Cardiac septum (tissue), 1 donor: ENCODE measurements at regions of chr10 and their contacts with region 1.

Region 1: DNA sequence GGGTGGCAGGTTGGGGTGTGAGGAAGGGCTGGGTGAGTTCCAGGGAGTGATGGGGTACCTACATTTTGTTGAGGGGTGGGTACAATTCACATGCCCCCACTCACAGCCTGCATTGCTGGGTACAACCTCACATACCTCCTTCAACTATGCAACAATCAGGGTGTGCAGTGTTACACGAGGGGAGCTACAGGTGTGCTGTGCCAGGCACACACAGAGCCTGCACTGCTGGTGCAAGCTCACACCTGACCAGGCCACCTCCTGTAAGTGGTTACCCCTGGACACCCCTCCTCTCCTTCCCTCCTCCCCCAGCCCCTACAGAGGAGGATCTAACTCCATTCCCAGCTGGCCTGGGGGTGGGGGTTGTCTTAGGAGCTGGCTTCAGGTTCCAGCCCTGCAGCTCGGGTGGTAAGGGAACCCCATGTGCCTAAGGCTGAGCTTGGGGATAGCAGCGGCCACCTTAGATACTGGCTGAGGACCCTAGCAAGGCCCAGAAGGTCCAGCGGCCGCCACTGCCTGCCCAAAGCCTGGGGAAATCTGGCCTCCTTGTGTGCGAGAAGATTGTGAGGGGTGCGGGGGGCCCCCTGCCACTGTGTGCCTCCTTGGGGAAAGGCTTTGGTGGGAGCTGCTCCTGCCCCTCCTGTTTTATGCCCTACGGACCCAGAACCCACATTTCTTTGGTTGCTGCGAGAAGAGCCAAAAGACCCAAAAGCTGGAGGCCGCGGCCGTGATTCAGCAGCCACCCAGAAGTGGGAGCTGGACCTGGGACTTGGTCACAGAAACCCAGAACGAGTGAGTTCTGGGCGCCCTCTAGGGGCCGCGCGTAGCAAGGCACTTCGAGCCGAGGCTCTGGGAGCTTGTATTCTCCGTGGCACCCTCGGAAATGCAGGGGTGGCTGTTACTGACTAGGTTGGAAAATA is 10.8 kb downstream of the TLX1 start:
- DNase-seq: peak; percentile 89

Region 2: GRCh38 chr10:101050208-101051069 is 91.4 kb before region 1 on chr10:
- intact Hi-C with region 1: loop called (anchors 5 kb)
- DNase-seq: peak; percentile 85

Region 3: GRCh38 chr10:101095542-101096213 is 46.2 kb before region 1 on chr10:
- intact Hi-C with region 1: loop called (anchors 2 kb)
- DNase-seq: no peak

Region 4: DNA sequence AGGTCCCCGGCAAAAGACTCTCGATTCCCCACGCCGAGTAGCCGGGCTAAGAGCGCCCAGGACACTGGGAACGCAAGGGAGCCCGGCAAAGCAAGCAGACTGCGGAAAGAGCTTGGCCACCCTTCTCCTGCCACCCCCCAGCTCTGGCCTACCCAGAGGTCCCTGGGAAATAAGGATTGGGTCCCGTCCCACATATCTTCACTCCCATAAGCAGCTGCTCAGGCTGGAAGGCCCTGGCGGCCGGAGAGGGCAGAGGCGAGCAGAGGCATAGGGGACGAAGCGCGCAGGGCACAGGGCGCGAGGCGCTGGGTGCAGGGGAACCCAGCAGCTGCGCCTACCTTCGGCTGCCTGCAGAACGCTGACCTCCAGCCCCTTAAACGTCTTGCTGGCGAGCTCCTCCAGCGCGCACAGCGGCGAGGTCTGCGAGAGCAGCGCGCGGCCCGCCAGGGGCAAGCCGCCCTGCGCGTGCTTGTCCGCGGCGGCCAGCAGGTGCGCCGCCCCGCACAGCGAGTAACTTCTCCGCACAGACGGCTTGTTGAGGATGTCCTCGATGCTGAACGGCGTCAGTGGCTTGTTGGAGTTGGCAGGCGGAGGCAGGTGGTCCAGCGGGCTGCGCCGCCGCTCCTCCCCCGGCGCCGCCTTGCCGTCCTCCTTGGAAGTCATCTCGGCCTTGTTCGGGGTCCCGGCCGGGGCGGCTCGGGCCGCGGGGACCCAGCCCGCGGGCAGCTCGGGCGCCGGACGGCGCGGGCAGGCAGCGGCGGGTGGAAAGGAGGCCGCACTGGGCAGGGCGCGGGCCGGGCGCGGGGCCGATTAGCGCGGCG is 86.5 kb after region 1 on chr10:
- intact Hi-C with region 1: loop called (anchors 5 kb)
- DNase-seq: no peak

Region 5: GRCh38 chr10:101587725-101588653 is 446.1 kb after region 1 on chr10 and contains the starts of genes DPCD and POLL:
- intact Hi-C with region 1: no loop called
- DNase-seq: peak; percentile 98
- total RNA-seq, gene DPCD: 17.5 TPM
- total RNA-seq, gene POLL: 18.8 TPM